ENCODE measurements at regions of chr11 and their contacts with region 1.

Region 1: GRCh38 chr11:72080256-72080974 is at the starts of genes LRRC51 and NUMA1:
- DNase-seq: peak; percentile 99 to 100
- ATAC-seq: peak; percentile 84
- total RNA-seq, gene LRRC51: 8.0 to 10.1 TPM
- total RNA-seq, gene NUMA1: 157 to 183 TPM

Region 2: DNA sequence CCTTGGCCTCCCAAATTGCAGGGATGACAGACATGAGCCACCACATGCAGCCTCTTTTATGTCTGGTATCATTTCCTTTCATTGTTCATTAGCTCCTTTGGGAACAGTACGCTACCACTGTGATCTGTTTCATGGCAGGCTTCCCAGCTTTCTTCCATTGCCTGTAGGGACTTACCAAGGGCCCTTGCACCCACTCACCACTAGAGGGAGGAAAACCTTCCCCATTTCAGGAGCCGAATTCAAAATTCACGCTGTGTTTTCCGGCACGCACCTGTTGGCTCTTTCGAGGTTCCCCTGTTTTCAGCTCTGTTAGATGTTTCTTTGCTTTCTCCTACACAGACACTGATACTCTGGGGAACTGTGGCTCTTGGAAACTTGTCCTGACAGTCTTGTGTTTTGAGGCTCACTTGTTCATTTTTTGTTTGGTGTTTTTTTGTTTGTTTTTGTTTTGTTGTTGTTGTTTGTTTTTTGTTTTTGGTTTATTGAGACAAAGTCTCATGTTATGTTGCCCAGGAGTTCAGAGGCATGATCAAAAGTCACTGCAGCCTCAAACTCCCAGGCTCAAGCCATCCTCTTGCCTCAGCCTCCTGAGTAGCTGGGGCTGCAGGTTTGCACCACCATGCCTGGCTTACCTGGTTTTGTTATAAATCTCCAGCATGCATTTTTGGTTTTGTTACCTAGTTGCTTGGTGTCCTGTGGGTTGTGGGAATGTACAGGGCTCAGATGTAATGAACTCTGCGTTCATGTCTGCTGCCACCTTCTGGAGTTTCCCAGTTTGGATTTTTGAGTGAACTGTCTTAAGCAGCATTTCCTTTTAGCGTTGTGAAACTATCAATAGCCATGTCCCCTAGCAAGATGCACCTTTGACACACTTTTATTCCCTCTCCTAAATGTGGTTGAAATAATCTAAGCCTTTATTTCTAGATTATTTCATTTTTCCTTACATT is 500.1 kb before region 1 on chr11:
- intact Hi-C with region 1: no loop called
- DNase-seq: peak; percentile 54 to 58
- ATAC-seq: peak; percentile 88

Region 3: DNA sequence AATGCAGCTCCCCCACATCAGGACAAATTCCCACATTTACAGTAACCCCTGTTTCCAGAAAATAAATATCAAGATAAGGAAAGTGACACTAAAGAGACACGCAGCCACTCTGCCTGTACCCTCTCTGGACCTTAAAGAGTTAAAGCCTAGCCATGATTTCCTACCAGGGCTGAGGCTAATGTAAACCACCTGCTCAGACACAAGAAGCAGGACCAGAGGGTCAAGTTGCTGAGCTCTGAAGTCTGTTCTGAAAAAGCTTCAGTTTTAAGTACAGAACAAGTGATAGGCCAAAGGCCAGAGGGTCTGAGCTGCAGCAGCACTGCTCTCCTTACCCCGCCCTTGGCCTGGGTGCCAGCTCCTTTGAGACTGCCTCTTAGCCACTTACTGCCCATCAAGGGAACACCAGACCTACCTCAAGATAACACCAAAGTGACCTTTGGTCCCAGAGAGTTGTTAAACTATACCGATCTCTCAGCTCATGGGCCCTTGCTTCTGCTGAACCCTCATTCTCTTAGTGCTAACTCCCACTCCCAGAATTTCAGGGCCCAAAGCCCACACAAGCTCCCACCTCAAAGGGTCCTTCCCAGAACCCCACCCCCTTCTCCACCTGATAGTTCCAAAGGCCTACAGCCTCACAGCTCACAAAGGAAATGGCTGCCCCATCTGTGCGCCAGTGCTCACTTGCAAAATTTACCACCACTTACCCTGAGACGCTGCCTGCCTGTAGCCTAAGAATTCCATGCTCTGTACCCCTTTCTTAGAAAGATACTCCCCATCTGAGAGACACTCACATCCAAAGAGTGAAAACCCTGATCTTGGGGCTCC is 41.2 kb before region 1 on chr11:
- intact Hi-C with region 1: loop called in 1 of 2 experiments (anchors 1 kb)
- DNase-seq: peak; percentile 81 to 88
- ATAC-seq: peak; percentile 68